ENCODE measurements at regions of chr6 and their contacts with region 1.

Region 1: DNA sequence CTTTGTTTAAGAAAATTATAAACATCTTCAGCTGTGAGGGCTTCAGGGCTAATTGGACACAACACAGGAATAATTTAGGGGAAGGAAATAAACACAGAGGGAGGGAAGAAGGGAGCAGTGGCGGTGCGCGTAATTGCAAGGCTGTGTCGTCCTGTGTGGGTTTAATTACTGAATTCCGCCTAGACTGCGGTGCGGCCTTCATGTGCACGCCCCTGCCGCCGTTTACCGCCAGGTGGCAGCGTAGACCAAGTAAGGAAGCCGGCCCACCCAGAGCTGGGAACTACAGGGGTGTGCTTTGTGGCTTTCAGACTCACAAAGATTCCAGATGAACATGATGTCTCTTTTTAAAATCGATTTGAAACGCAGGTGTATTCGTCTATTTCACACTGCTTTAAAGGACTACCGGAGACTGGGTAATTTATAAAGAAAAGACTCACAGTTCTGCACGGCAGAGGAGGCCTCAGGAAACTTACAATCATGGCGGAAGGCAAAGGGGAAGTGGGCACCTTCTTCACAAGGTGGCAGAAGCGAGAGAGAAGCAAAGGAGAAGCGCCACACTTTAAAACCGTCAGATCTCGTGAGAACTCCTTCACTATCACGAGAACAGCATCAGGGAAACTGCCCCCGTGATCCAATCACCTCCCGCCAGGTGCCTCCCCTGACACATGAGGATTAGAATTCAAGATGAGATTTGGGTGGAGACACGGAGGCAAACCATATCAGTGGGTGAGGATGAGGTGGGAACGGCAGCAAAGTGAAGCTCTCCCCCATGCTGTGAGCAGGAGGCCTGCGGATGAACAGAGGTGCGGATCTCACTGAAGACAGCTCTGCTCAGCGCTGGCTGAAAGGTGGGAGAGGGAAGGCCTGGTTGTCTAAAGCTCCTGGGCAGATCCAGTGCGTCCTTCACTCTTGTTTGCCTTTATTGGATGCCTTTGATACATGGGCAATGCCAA is 222.0 kb upstream of the PDE10A start:
- DNase-seq: peak; percentile 78 to 82 (median 80)
- ATAC-seq: peak; percentile 100
- H3K4me3 ChIP-seq: no peak overlapping the region
- H3K27ac ChIP-seq: no peak overlapping the region
- H3K4me1 ChIP-seq: no peaks in the 10 kb centered on the region
- H3K27me3 ChIP-seq: no peaks in the 10 kb centered on the region; a peak in 1 of 5 replicates
- CTCF ChIP-seq: peak; percentile 89 to 95 (median 92)
- EP300 ChIP-seq: no peak
- POLR2A ChIP-seq: no peak
- RAD21 ChIP-seq: peak; percentile 74 to 87

Region 2: DNA sequence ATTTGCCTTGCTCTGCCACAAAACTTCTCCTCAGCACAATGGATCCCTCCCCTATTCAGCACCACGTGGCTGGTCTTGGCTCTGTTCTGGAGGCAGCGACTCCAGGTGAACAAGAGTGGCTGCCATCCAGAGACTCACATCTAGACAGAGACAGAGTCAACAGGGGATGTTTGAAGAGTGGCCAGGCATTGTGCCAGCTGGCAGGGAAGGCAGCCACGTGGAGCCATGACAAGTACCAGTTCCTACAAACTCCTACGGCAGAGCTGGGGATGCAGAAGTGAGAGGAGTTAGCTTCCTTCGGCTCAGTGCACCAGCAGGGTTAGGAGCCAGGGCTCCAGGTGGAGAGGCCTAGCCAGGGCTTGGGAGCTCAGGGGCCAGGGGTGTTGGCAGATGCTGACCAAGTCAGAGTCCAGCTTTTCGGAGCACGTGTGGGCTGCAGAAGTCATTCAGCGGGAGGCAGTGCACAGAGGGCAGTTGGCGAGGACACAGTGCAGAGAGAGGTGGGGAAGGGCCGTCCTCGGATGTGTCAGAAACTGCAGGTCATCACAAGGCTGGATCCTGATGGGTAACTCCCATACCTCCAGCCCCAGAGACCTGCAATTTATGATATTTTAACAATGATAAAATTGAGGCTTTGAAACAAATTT is 50.4 kb before region 1 on chr6:
- CTCF ChIA-PET with region 1: no interaction called
- POLR2A ChIA-PET with region 1: no interaction called
- in situ Hi-C with region 1: no loop called
- intact Hi-C with region 1: no loop called
- DNase-seq: no peak
- ATAC-seq: no peak
- H3K4me3 ChIP-seq: no peak overlapping the region
- H3K27ac ChIP-seq: no peak overlapping the region
- H3K4me1 ChIP-seq: no peaks in the 10 kb centered on the region; a peak in 1 of 5 replicates
- H3K27me3 ChIP-seq: peaks cover 5 to 43% of the 10 kb centered on the region in 2 experiments; a peak in 3 of 5 replicates
- CTCF ChIP-seq: no peak
- EP300 ChIP-seq: no peak
- POLR2A ChIP-seq: no peak
- RAD21 ChIP-seq: no peak

Region 3: DNA sequence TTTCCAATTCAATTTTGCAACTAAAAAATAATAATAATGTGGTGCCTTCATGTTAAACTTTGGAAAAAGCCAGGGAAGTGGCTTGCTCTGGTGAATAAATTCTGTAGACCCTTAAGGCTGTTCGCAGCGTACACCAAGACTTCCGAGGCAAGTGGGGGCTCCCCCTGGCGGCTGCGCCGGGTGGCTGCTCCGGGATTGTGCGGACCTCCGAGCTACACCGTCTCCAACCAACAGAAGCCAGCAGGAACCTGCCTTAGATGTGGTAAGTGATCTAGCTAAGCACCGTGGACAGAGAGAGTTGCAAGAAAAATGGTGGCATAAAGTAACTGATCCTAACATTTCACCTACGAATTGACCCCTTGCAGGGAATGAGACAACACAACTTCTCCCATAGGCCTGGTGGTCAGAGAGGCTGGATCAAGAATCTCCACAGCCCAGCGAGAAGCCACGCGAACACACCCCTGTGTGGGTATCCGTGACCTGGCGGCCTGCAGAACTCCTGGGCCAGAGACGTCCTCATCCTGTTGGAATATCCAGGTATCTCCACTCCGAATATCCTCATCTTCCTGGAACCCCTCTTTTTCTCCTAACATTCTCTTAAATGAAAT is 212.9 kb after region 1 on chr6:
- CTCF ChIA-PET with region 1: interaction called, 3 read pairs
- POLR2A ChIA-PET with region 1: interaction called, 3 read pairs
- in situ Hi-C with region 1: no loop called
- intact Hi-C with region 1: loop called (anchors 2 kb)
- DNase-seq: peak; percentile 56 to 63 (median 59)
- ATAC-seq: peak; percentile 99
- H3K4me3 ChIP-seq: no peak overlapping the region
- H3K27ac ChIP-seq: no peak overlapping the region
- H3K4me1 ChIP-seq: 0 out of 5 replicates have a peak, but pooled peaks cover 0 to 2% of the 10 kb centered on the region in 2 experiments
- H3K27me3 ChIP-seq: no peaks in the 10 kb centered on the region; a peak in 1 of 5 replicates
- CTCF ChIP-seq: peak; percentile 78 to 88 (median 82)
- EP300 ChIP-seq: no peak
- POLR2A ChIP-seq: no peak
- RAD21 ChIP-seq: peak in 1 of 2 experiments; percentile 56; a peak in 2 of 4 replicates

Region 4: GRCh38 chr6:167349631-167350274 is 1464.7 kb after region 1 on chr6:
- CTCF ChIA-PET with region 1: no interaction called
- POLR2A ChIA-PET with region 1: no interaction called
- in situ Hi-C with region 1: loop called (anchors 25 kb)
- intact Hi-C with region 1: no loop called
- DNase-seq: no peak
- ATAC-seq: no peak
- H3K4me3 ChIP-seq: no peak overlapping the region
- H3K27ac ChIP-seq: no peak overlapping the region
- H3K4me1 ChIP-seq: peaks cover 0 to 9% of the 10 kb centered on the region in 2 experiments; a peak in 1 of 5 replicates
- H3K27me3 ChIP-seq: peaks cover 12 to 37% of the 10 kb centered on the region in 2 experiments; a peak in 4 of 5 replicates
- CTCF ChIP-seq: no peak
- EP300 ChIP-seq: no peak
- POLR2A ChIP-seq: no peak
- RAD21 ChIP-seq: no peak

Measured in K562 (cell line).